Common myeloid progenitor, CD34-positive (primary cell): ENCODE measurements at regions of chr14 and their contacts with region 1.

Region 1: GRCh38 chr14:75307700-75308379 is 29.2 kb downstream of the FOS start:
- DNase-seq: peak; percentile 75 to 81 (median 75)
- H3K4me3 ChIP-seq: peak overlapping the region in 1 of 7 experiments; percentile 16
- H3K27ac ChIP-seq: no peak overlapping the region
- H3K4me1 ChIP-seq: peaks cover 0 to 15% (median 7%) of the 10 kb centered on the region in 4 experiments
- H3K27me3 ChIP-seq: no peaks in the 10 kb centered on the region

Region 2: DNA sequence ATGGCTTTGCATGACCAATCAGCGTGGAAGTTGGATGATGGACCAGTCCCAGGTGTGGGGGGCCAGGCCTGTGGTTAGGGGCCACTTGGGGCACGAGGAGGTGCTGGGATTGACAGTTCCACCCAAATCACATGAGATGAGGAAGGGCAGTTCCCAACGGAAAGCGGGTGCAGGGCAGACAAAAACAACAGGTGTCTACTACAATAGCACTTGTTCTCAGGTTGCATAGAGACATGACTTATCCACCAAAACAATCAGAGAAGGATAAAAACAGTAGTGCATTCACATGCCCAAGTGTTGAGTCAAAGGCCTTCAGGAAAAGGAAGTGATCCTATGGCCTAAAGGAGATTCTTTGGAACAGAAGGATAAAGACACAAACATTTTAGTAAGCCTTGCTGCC is 319.7 kb before region 1 on chr14:
- CTCF ChIA-PET with region 1: no interaction called
- POLR2A ChIA-PET with region 1: no interaction called
- DNase-seq: no peak
- H3K4me3 ChIP-seq: no peak overlapping the region
- H3K27ac ChIP-seq: no peak overlapping the region
- H3K4me1 ChIP-seq: no peaks in the 10 kb centered on the region
- H3K27me3 ChIP-seq: no peaks in the 10 kb centered on the region

Region 3: DNA sequence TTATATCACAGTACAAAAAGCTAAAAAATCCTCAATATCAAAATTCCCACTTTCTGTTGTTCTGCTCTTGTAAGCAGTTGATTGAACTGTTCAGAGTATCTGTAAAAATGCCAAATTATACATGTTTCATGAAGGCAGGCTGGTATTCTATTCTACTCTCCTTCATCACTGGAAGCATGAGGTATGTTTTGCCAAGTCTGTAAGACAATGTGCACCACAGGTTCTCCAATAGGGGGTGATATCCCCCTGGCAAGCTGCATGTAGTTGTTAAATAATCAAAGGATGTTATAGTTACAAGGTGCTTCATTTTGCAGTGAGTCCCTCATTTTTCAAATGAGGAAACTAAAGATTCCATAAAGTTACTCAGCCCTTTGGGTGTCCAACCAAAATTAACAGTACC is 165.9 kb before region 1 on chr14:
- CTCF ChIA-PET with region 1: interaction called, 106 read pairs
- POLR2A ChIA-PET with region 1: no interaction called
- DNase-seq: peak; percentile 63 to 74 (median 73)
- H3K4me3 ChIP-seq: no peak overlapping the region
- H3K27ac ChIP-seq: no peak overlapping the region
- H3K4me1 ChIP-seq: peaks cover 17 to 48% (median 33%) of the 10 kb centered on the region in 4 experiments
- H3K27me3 ChIP-seq: no peaks in the 10 kb centered on the region

Region 4: DNA sequence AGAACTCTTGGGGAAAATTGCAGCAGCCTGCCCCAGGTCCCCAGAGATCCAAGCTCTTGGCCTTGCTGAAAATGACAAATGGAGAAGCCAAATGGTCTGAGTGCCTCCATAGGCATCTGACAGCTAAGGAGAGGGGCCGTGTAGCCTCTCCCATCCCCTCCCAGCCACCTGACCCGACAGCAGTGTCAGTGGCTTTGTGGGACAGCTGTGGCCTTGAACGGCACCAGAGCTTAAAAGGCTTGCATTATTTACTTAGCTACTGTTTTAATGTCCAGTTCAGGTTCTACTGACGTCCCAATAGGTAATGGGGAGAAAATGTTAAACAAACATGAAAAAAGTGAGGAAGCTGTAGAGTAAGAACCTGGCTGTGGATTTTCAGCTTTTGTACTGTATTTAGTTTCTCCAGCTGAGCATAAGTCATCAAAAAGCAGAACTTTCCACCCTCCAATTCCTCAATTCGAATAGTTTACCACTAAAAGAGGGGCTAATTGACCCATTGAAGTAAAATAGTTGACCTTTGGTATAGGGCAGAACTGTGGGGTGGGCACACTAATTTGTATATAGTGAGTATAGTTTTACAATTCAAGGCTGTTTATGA is 20.8 kb after region 1 on chr14:
- CTCF ChIA-PET with region 1: interaction called, 14 read pairs
- POLR2A ChIA-PET with region 1: no interaction called
- DNase-seq: no peak
- H3K4me3 ChIP-seq: no peak overlapping the region
- H3K27ac ChIP-seq: no peak overlapping the region
- H3K4me1 ChIP-seq: peaks cover 0 to 46% (median 18%) of the 10 kb centered on the region in 4 experiments
- H3K27me3 ChIP-seq: no peaks in the 10 kb centered on the region

Region 5: DNA sequence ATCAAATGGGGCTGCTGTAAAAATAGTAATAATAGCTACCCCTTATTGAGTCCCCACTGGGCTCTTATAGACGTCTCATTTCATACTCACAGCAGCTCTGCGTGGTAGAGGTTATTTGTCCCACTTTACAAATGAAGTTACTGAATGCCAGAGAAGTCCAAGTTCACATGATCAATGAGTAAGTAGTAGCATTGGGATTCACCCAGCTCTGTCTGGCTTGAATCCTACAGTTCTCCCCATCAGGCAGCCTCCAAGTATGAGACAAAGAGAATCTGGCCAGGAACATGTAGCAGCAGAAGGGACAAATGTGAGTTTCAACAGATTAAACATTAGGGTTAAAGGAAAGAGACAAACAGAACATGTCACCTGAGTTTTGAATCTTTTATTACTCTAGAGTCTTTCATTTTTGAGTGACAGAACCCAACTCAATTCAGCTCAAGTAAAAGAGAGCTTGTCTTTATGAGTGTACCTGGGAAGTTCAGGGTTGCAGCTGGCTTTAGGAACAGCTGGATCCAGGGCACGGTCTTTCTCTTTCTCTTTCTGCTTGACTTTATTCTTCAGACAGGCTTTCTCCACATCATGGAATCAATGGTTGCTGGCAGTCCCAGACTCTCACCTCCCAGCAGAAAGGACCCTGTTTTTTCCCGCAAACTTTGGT is 55.9 kb after region 1 on chr14:
- CTCF ChIA-PET with region 1: no interaction called
- POLR2A ChIA-PET with region 1: no interaction called
- DNase-seq: no peak
- H3K4me3 ChIP-seq: no peak overlapping the region
- H3K27ac ChIP-seq: no peak overlapping the region
- H3K4me1 ChIP-seq: peaks cover 3 to 20% (median 7%) of the 10 kb centered on the region in 4 experiments
- H3K27me3 ChIP-seq: no peaks in the 10 kb centered on the region

Region 6: GRCh38 chr14:75459099-75459741 is 151.4 kb after region 1 on chr14:
- CTCF ChIA-PET with region 1: interaction called, 86 read pairs
- POLR2A ChIA-PET with region 1: no interaction called
- DNase-seq: peak; percentile 89 to 99 (median 99)
- H3K4me3 ChIP-seq: peak overlapping the region in 1 of 7 experiments; percentile 33
- H3K27ac ChIP-seq: peak overlapping the region; percentile 74 to 84
- H3K4me1 ChIP-seq: peaks cover 7 to 62% (median 48%) of the 10 kb centered on the region in 4 experiments
- H3K27me3 ChIP-seq: no peaks in the 10 kb centered on the region

Region 7: DNA sequence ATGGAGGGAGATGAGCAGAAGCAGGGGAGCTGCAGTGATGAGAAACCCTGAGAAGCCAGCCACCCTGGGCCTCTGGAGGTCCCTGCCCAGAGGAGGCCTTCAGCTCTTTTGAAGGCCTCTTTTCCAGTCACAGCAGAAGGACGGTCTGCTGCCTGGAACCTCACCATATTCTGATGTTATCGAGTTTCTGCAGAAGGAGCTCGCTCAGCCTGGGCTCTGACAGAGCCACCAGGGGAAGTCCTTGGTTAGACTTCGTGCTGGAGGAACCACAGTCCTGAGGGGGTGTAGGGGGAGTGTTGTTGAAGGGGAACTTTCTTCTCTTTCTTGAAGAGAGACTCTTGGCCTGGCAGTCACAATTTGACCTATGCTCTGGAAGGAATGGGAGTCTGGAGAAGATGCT is 189.4 kb after region 1 on chr14:
- CTCF ChIA-PET with region 1: interaction called, 63 read pairs
- POLR2A ChIA-PET with region 1: no interaction called
- DNase-seq: peak; percentile 68 to 93 (median 92)
- H3K4me3 ChIP-seq: peak overlapping the region in 2 of 7 experiments; percentile 2 to 7
- H3K27ac ChIP-seq: no peak overlapping the region
- H3K4me1 ChIP-seq: peaks cover 8 to 46% (median 34%) of the 10 kb centered on the region in 4 experiments
- H3K27me3 ChIP-seq: no peaks in the 10 kb centered on the region

Region 8: DNA sequence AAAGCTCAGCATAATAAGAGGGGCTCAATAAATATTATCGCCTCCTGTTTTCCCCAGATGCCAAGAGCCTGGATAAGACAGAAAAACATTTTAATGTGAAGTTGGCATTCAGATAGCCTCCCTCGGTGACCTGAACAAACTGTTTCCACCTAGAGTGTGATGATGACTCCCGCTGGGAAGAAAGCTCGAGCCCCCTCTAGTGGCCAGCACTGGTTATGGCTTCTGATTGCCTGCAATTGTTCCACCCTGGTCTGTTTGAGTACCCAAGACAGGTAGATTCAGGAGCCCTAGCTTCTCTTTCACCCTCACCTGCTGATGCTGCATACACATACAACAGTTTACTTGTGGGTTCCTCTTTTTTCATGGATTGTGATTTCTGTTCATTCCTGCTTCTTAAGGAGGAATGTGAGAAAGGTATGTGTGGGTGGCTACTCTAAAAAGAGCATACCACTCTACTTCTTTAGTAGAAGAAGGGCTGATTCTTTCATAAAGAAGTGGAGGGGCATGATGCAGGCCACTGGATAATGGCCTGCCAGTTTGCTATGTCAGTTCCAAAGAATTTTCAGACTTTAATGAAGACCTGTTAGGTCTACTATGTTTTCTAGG is 346.4 kb after region 1 on chr14:
- CTCF ChIA-PET with region 1: interaction called, 13 read pairs
- POLR2A ChIA-PET with region 1: no interaction called
- DNase-seq: peak; percentile 61 to 81 (median 72)
- H3K4me3 ChIP-seq: no peak overlapping the region
- H3K27ac ChIP-seq: no peak overlapping the region
- H3K4me1 ChIP-seq: peaks cover 0 to 8% (median under 1%) of the 10 kb centered on the region in 4 experiments
- H3K27me3 ChIP-seq: no peaks in the 10 kb centered on the region